ENCODE measurements at regions of chr12 and their contacts with region 1.

Region 1: GRCh38 chr12:48350249-48351021 is at the start of gene ZNF641:
- DNase-seq: peak; percentile 87
- H3K4me3 ChIP-seq: peak within 1 kb of the TSS; percentile 61 to 89 (median 76)
- H3K27ac ChIP-seq: peak within 1 kb of the TSS; percentile 90 to 96 (median 94)
- H3K4me1 ChIP-seq: peaks cover 0 to 35% (median 21%) of the 10 kb centered on the region in 4 donors
- H3K27me3 ChIP-seq: no peaks in the 10 kb centered on the region
- CTCF ChIP-seq: no peak
- EP300 ChIP-seq: no peak
- POLR2A ChIP-seq: no peak
- total RNA-seq, gene ZNF641: 16.6 to 28.5 (median 24.7) TPM

Region 2: GRCh38 chr12:48197971-48198671 is 152.3 kb before region 1 on chr12:
- intact Hi-C with region 1: loop called (anchors 5 kb)
- DNase-seq: peak; percentile 99
- H3K4me3 ChIP-seq: peak overlapping the region; percentile 51 to 75 (median 62)
- H3K27ac ChIP-seq: peak overlapping the region; percentile 89 to 98 (median 94)
- H3K4me1 ChIP-seq: peaks cover 0 to 31% (median 28%) of the 10 kb centered on the region in 4 donors
- H3K27me3 ChIP-seq: no peaks in the 10 kb centered on the region
- CTCF ChIP-seq: no peak
- EP300 ChIP-seq: peak in 1 of 4 donors; percentile 54
- POLR2A ChIP-seq: peak; percentile 96

Region 3: GRCh38 chr12:48216785-48217184 is 133.7 kb before region 1 on chr12:
- intact Hi-C with region 1: loop called (anchors 5 kb)
- DNase-seq: no peak
- H3K4me3 ChIP-seq: no peak overlapping the region
- H3K27ac ChIP-seq: peak overlapping the region in 3 of 4 donors; percentile 81 to 88 (median 86)
- H3K4me1 ChIP-seq: peaks cover 0 to 43% (median 13%) of the 10 kb centered on the region in 4 donors
- H3K27me3 ChIP-seq: no peaks in the 10 kb centered on the region
- CTCF ChIP-seq: no peak
- EP300 ChIP-seq: no peak
- POLR2A ChIP-seq: no peak

Region 4: GRCh38 chr12:48237162-48237561 is 113.3 kb before region 1 on chr12:
- intact Hi-C with region 1: no loop called
- DNase-seq: no peak
- H3K4me3 ChIP-seq: no peak overlapping the region
- H3K27ac ChIP-seq: no peak overlapping the region
- H3K4me1 ChIP-seq: no peaks in the 10 kb centered on the region
- H3K27me3 ChIP-seq: no peaks in the 10 kb centered on the region
- CTCF ChIP-seq: no peak
- EP300 ChIP-seq: no peak
- POLR2A ChIP-seq: no peak

Region 5: GRCh38 chr12:48296586-48297282 is 53.7 kb before region 1 on chr12:
- intact Hi-C with region 1: loop called (anchors 5 kb)
- DNase-seq: peak; percentile 88
- H3K4me3 ChIP-seq: peak overlapping the region; percentile 35 to 64 (median 58)
- H3K27ac ChIP-seq: peak overlapping the region; percentile 11 to 73 (median 62)
- H3K4me1 ChIP-seq: peaks cover 0 to 12% (median 0%) of the 10 kb centered on the region in 4 donors
- H3K27me3 ChIP-seq: no peaks in the 10 kb centered on the region
- CTCF ChIP-seq: no peak
- EP300 ChIP-seq: no peak
- POLR2A ChIP-seq: no peak

Region 6: DNA sequence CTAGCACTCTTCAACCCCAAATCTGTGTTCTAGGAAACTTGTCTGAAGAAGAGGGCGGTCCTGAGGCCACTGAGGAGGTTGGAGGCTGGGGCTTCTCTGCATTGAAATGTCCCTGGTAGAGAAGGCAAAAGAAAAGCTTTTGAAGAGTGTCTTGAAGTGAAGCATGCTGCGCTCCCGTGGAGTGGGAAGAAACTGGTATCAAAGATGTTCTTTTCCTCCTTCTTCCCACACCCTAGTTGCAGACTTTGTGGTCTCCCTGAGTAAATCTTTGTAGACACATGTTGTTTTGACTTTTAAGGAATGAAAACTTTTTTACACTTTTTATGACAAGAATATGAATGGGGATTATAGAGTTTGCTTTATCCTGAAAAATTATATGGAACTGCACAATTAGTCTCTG is 63.0 kb after region 1 on chr12:
- intact Hi-C with region 1: loop called (anchors 2 kb)
- DNase-seq: no peak
- H3K4me3 ChIP-seq: no peak overlapping the region
- H3K27ac ChIP-seq: peak overlapping the region in 3 of 4 donors; percentile 52 to 64 (median 60)
- H3K4me1 ChIP-seq: peaks cover 0 to 22% (median 19%) of the 10 kb centered on the region in 4 donors
- H3K27me3 ChIP-seq: no peaks in the 10 kb centered on the region
- CTCF ChIP-seq: no peak
- EP300 ChIP-seq: no peak
- POLR2A ChIP-seq: no peak

Region 7: GRCh38 chr12:48454667-48455066 is 104.2 kb after region 1 on chr12:
- intact Hi-C with region 1: loop called (anchors 5 kb)
- DNase-seq: no peak
- H3K4me3 ChIP-seq: no peak overlapping the region
- H3K27ac ChIP-seq: no peak overlapping the region
- H3K4me1 ChIP-seq: no peaks in the 10 kb centered on the region
- H3K27me3 ChIP-seq: no peaks in the 10 kb centered on the region
- CTCF ChIP-seq: peak in 2 of 4 experiments; percentile 25 to 52
- EP300 ChIP-seq: no peak
- POLR2A ChIP-seq: no peak